CD8-positive, alpha-beta T cell (primary cell): ENCODE measurements at regions of chr6 and their contacts with region 1.

Region 1: GRCh38 chr6:156776840-156777576 is at the start of gene ARID1B:
- DNase-seq: peak; percentile 55 to 92 (median 81)
- ATAC-seq: peak; percentile 57
- H3K4me3 ChIP-seq: peak within 1 kb of the TSS; percentile 47 to 76
- H3K4me3 Mint-ChIP-seq: peak within 1 kb of the TSS; percentile 90
- H3K27ac ChIP-seq: peak within 1 kb of the TSS; percentile 76 to 79
- H3K27ac Mint-ChIP-seq: peak within 1 kb of the TSS; percentile 96
- H3K4me1 ChIP-seq: peaks cover 5% of the 10 kb centered on the region
- H3K4me1 Mint-ChIP-seq: peaks cover 30% of the 10 kb centered on the region
- H3K27me3 ChIP-seq: no peaks in the 10 kb centered on the region
- H3K27me3 Mint-ChIP-seq: no peaks in the 10 kb centered on the region
- CTCF ChIP-seq: no peak
- total RNA-seq, gene ARID1B: 98.4 to 111 TPM

Region 2: GRCh38 chr6:154791556-154792317 is 1985.3 kb before region 1 on chr6:
- CTCF ChIA-PET with region 1: no interaction called
- POLR2A ChIA-PET with region 1: no interaction called
- intact Hi-C with region 1: no loop called
- DNase-seq: no peak
- ATAC-seq: no peak
- H3K4me3 ChIP-seq: no peak overlapping the region
- H3K4me3 Mint-ChIP-seq: no peak overlapping the region
- H3K27ac ChIP-seq: no peak overlapping the region
- H3K27ac Mint-ChIP-seq: no peak overlapping the region
- H3K4me1 ChIP-seq: no peaks in the 10 kb centered on the region
- H3K4me1 Mint-ChIP-seq: peaks cover 22% of the 10 kb centered on the region
- H3K27me3 ChIP-seq: no peaks in the 10 kb centered on the region
- H3K27me3 Mint-ChIP-seq: no peaks in the 10 kb centered on the region
- CTCF ChIP-seq: no peak

Region 3: DNA sequence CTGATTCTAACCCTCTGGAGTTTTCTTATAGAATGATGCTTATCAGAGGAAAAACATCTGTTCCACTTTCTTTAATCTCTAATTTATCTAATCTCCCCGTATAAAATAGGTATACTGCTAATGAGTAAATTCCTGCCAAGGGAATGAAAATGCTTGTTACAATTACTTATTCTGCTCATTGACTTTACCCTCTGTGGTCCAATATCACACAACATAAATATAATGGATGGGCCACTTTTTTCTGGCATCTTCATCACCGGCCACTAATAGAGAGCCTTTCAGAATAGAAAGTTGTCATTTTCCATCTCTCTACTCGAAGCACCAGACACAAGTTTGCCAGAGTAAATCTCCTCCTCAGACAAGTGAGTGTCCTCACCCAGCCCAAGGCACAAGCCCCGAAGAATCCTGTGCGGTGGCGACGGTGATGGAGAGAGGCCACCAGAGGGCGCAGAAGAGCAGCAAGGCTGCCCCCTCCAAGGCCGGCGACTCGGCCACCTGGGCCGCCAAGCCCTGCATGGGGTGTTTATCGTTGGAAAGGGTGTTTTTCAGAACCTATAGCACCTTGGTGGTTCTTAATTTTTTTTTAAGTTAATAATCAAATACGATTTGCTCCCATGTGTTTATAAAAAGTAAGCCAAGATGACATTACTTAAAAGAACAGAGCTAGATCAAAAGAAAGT is 212.7 kb before region 1 on chr6:
- CTCF ChIA-PET with region 1: no interaction called
- POLR2A ChIA-PET with region 1: no interaction called
- intact Hi-C with region 1: loop called (anchors 2 to 10 kb)
- DNase-seq: peak; percentile 59 to 88 (median 73)
- ATAC-seq: peak; percentile 93
- H3K4me3 ChIP-seq: no peak overlapping the region
- H3K4me3 Mint-ChIP-seq: no peak overlapping the region
- H3K27ac ChIP-seq: no peak overlapping the region
- H3K27ac Mint-ChIP-seq: no peak overlapping the region
- H3K4me1 ChIP-seq: no peaks in the 10 kb centered on the region
- H3K4me1 Mint-ChIP-seq: no peaks in the 10 kb centered on the region
- H3K27me3 ChIP-seq: peaks cover 0 to 3% of the 10 kb centered on the region in 2 experiments
- H3K27me3 Mint-ChIP-seq: peaks cover 6% of the 10 kb centered on the region
- CTCF ChIP-seq: peak; percentile 89

Region 4: GRCh38 chr6:156719720-156720563 is 57.1 kb before region 1 on chr6:
- CTCF ChIA-PET with region 1: no interaction called
- POLR2A ChIA-PET with region 1: interaction called, 18 read pairs
- intact Hi-C with region 1: loop called (anchors 1 to 2 kb)
- DNase-seq: peak; percentile 34 to 84 (median 73)
- ATAC-seq: peak; percentile 90
- H3K4me3 ChIP-seq: peak overlapping the region; percentile 57 to 59
- H3K4me3 Mint-ChIP-seq: peak overlapping the region; percentile 89
- H3K27ac ChIP-seq: peak overlapping the region; percentile 57 to 63
- H3K27ac Mint-ChIP-seq: peak overlapping the region; percentile 94
- H3K4me1 ChIP-seq: peaks cover 7% of the 10 kb centered on the region
- H3K4me1 Mint-ChIP-seq: peaks cover 14% of the 10 kb centered on the region
- H3K27me3 ChIP-seq: no peaks in the 10 kb centered on the region
- H3K27me3 Mint-ChIP-seq: no peaks in the 10 kb centered on the region
- CTCF ChIP-seq: no peak

Region 5: DNA sequence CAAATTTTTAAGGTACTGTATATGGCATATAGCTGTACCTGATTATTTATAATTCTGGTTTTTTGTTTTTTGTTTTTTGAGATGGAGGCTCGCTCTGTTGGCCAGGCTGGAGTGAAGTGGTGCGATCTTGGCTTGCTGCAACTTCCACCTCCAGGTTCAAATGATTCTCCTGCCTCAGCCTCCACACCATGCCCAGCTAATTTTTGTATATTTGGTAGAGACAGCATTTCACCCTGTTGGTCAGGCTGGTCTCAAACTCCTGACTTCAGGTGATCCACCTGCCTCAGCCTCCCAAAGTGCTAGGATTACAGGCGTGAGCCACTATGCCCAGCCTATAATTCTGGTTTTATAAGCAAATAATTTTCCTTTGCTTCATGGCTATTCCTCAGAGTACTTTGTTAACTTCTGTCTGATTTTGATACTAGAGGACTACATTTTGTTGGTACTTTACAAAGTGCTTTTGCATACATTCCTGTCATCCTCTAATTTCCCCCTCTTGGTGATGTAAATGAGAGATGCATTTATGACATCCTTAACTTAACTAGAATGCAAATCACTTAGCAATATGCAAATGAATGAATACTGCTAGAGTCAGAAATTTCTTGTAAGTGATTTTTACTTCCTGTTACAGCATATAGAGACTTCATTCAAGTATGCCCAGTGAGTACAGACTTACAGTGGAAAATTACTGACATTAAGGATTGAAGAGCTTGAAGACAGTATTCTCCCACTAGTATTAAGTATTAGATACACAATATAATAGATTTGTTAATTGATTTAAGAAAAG is 35.5 kb before region 1 on chr6:
- CTCF ChIA-PET with region 1: no interaction called
- POLR2A ChIA-PET with region 1: no interaction called
- intact Hi-C with region 1: no loop called
- DNase-seq: no peak
- ATAC-seq: no peak
- H3K4me3 ChIP-seq: no peak overlapping the region
- H3K4me3 Mint-ChIP-seq: no peak overlapping the region
- H3K27ac ChIP-seq: no peak overlapping the region
- H3K27ac Mint-ChIP-seq: no peak overlapping the region
- H3K4me1 ChIP-seq: no peaks in the 10 kb centered on the region
- H3K4me1 Mint-ChIP-seq: no peaks in the 10 kb centered on the region
- H3K27me3 ChIP-seq: no peaks in the 10 kb centered on the region
- H3K27me3 Mint-ChIP-seq: peaks cover 5% of the 10 kb centered on the region
- CTCF ChIP-seq: no peak

Region 6: GRCh38 chr6:157021344-157021992 is 244.5 kb after region 1 on chr6:
- CTCF ChIA-PET with region 1: interaction called, 4 read pairs
- POLR2A ChIA-PET with region 1: interaction called, 22 read pairs
- intact Hi-C with region 1: loop called (anchors 1 kb)
- DNase-seq: peak; percentile 75 to 93 (median 89)
- ATAC-seq: peak; percentile 75
- H3K4me3 ChIP-seq: peak overlapping the region; percentile 66 to 93
- H3K4me3 Mint-ChIP-seq: peak overlapping the region; percentile 95
- H3K27ac ChIP-seq: peak overlapping the region; percentile 96 to 98
- H3K27ac Mint-ChIP-seq: peak overlapping the region; percentile 100
- H3K4me1 ChIP-seq: peaks cover 8% of the 10 kb centered on the region
- H3K4me1 Mint-ChIP-seq: peaks cover 59% of the 10 kb centered on the region
- H3K27me3 ChIP-seq: no peaks in the 10 kb centered on the region
- H3K27me3 Mint-ChIP-seq: no peaks in the 10 kb centered on the region
- CTCF ChIP-seq: no peak

Region 7: GRCh38 chr6:157274471-157275226 is 497.6 kb after region 1 on chr6:
- CTCF ChIA-PET with region 1: no interaction called
- POLR2A ChIA-PET with region 1: no interaction called
- intact Hi-C with region 1: loop called (anchors 1 to 5 kb)
- DNase-seq: peak; percentile 70 to 95 (median 85)
- ATAC-seq: peak; percentile 79
- H3K4me3 ChIP-seq: peak overlapping the region; percentile 71 to 81
- H3K4me3 Mint-ChIP-seq: peak overlapping the region; percentile 91
- H3K27ac ChIP-seq: peak overlapping the region; percentile 82 to 91
- H3K27ac Mint-ChIP-seq: peak overlapping the region; percentile 96
- H3K4me1 ChIP-seq: peaks cover 11% of the 10 kb centered on the region
- H3K4me1 Mint-ChIP-seq: peaks cover 7% of the 10 kb centered on the region
- H3K27me3 ChIP-seq: no peaks in the 10 kb centered on the region
- H3K27me3 Mint-ChIP-seq: no peaks in the 10 kb centered on the region
- CTCF ChIP-seq: peak; percentile 76

Region 8: GRCh38 chr6:157764178-157765033 is 987.4 kb after region 1 on chr6:
- CTCF ChIA-PET with region 1: no interaction called
- POLR2A ChIA-PET with region 1: no interaction called
- intact Hi-C with region 1: loop called in 1 of 2 experiments (anchors 5 kb)
- DNase-seq: peak; percentile 57 to 93 (median 80)
- ATAC-seq: peak; percentile 51
- H3K4me3 ChIP-seq: peak overlapping the region; percentile 10 to 23
- H3K4me3 Mint-ChIP-seq: peak overlapping the region; percentile 74
- H3K27ac ChIP-seq: peak overlapping the region; percentile 27 to 61
- H3K27ac Mint-ChIP-seq: peak overlapping the region; percentile 95
- H3K4me1 ChIP-seq: peaks cover 69% of the 10 kb centered on the region
- H3K4me1 Mint-ChIP-seq: peaks cover 73% of the 10 kb centered on the region
- H3K27me3 ChIP-seq: no peaks in the 10 kb centered on the region
- H3K27me3 Mint-ChIP-seq: no peaks in the 10 kb centered on the region
- CTCF ChIP-seq: no peak